ENCODE measurements at regions of chr4 and their contacts with region 1.

Region 1: DNA sequence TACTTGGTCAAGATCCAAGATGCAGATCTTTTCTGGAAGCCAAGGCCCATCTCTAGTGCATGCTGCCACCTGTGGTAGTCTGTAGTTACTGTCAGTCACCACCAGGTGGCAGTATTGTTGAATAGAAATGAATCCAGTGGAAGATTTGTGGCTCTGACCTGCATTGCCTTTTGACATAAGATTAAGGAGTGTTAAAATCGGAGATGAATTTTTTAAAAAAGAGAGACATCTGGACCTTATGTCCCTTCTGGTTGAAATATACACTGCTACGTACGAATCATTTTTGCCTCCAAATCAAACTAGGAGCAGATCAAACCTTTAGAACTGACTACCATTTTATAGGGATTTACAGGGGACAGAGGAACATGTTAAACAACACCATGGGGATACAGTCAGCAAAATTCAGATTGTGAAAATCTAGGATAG is 46.9 kb upstream of the RHOH start:
- DNase-seq: peak; percentile 79
- ATAC-seq: peak; percentile 95
- H3K4me3 ChIP-seq: no peak overlapping the region
- H3K27ac ChIP-seq: no peak overlapping the region
- H3K4me1 ChIP-seq: no peaks in the 10 kb centered on the region
- H3K27me3 ChIP-seq: no peaks in the 10 kb centered on the region
- CTCF ChIP-seq: peak; percentile 72 to 85 (median 73)
- EP300 ChIP-seq: no peak
- POLR2A ChIP-seq: no peak
- RAD21 ChIP-seq: peak; percentile 95

Region 2: GRCh38 chr4:40003986-40004385 is 146.0 kb before region 1 on chr4:
- CTCF ChIA-PET with region 1: no interaction called
- POLR2A ChIA-PET with region 1: no interaction called
- RAD21 ChIA-PET with region 1: no interaction called
- SMC1A ChIA-PET with region 1: no interaction called
- in situ Hi-C with region 1: no loop called
- intact Hi-C with region 1: no loop called
- DNase-seq: no peak
- ATAC-seq: peak; percentile 73
- H3K4me3 ChIP-seq: no peak overlapping the region
- H3K27ac ChIP-seq: no peak overlapping the region
- H3K4me1 ChIP-seq: no peaks in the 10 kb centered on the region
- H3K27me3 ChIP-seq: no peaks in the 10 kb centered on the region
- CTCF ChIP-seq: no peak
- EP300 ChIP-seq: no peak
- POLR2A ChIP-seq: no peak
- RAD21 ChIP-seq: no peak

Region 3: DNA sequence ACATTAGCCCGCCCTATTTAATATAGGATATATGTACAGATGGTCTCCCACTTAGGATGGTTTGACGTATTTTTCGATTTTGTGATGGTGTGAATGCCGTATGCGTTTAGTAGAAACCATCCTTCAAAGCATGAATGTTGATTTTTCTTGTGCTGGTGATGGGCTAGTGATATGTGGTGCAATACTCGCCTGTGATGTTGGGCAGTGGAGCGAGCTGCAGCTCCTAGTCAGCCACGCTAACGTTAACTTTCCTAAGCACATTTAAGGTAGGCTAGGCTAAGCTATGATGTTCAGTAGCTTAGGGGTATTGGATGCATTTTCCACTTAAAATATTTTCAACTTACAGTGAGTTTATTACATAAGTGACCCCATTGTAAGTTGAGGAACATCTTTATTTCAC is 10.3 kb after region 1 on chr4:
- CTCF ChIA-PET with region 1: interaction called, 6 read pairs
- POLR2A ChIA-PET with region 1: no interaction called
- RAD21 ChIA-PET with region 1: interaction called, 4 read pairs
- SMC1A ChIA-PET with region 1: interaction called, 15 read pairs
- in situ Hi-C with region 1: no loop called
- intact Hi-C with region 1: no loop called
- DNase-seq: no peak
- ATAC-seq: no peak
- H3K4me3 ChIP-seq: no peak overlapping the region
- H3K27ac ChIP-seq: no peak overlapping the region
- H3K4me1 ChIP-seq: no peaks in the 10 kb centered on the region
- H3K27me3 ChIP-seq: no peaks in the 10 kb centered on the region
- CTCF ChIP-seq: no peak
- EP300 ChIP-seq: no peak
- POLR2A ChIP-seq: no peak
- RAD21 ChIP-seq: no peak

Region 4: GRCh38 chr4:40185830-40186664 is 36.1 kb after region 1 on chr4:
- CTCF ChIA-PET with region 1: interaction called, 15 read pairs
- POLR2A ChIA-PET with region 1: interaction called, 16 read pairs
- RAD21 ChIA-PET with region 1: interaction called, 37 read pairs
- SMC1A ChIA-PET with region 1: interaction called, 95 read pairs
- in situ Hi-C with region 1: no loop called
- intact Hi-C with region 1: loop called (anchors 2 kb)
- DNase-seq: peak; percentile 94
- ATAC-seq: peak; percentile 66
- H3K4me3 ChIP-seq: no peak overlapping the region
- H3K27ac ChIP-seq: peak overlapping the region; percentile 89
- H3K4me1 ChIP-seq: peaks cover 46% of the 10 kb centered on the region
- H3K27me3 ChIP-seq: no peaks in the 10 kb centered on the region
- CTCF ChIP-seq: no peak
- EP300 ChIP-seq: peak; percentile 81 to 90
- POLR2A ChIP-seq: 0 out of 2 replicates have a peak, but pooled peaks have one; percentile 31
- RAD21 ChIP-seq: 0 out of 2 replicates have a peak, but pooled peaks have one; percentile 0

Region 5: DNA sequence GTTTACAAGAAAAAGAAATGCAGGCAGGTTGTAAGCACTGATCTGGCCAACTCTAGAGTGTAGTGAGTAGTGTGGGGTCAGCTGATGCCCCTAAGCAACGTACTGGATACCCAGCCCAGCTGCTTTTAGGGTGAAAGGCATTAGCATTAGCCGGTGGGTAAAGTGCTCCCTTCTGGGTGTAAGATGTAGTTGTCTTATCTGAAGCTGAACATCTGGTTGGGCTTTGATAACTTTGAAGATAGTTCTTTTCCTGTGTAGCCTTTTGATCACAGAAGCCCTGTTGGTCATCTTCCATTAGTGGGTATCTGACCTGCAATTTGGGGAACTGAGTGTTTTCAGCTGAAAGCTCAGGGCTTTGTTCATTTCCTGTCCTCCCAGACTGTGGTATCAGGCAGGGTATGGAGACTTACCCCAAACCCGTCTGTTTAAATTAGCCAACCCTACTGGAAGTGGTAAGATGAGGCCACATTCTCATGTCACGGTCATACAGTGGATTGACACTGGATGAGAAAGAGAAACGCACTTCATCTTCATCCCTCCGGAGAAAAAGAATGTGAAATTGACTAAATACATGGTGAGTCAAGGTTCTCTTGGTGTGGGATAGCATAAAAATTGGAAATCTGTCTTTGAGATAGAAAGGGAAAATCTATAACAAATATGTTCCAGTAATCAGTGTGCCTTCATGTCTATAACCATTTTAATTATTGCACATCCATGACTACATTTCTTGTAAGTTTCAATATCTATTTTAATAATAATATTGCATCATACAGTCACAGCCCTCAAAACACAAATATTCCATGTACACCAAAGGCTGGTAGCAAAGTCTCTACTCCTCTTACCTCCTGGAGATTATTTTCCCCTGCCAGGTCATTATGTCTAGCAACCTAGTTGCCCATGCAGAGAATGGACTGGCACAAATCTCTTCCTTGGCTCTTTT is 55.6 kb after region 1 on chr4:
- CTCF ChIA-PET with region 1: interaction called, 3 read pairs
- POLR2A ChIA-PET with region 1: interaction called, 4 read pairs
- RAD21 ChIA-PET with region 1: interaction called, 17 read pairs
- SMC1A ChIA-PET with region 1: interaction called, 21 read pairs
- in situ Hi-C with region 1: no loop called
- intact Hi-C with region 1: loop called (anchors 2 kb)
- DNase-seq: peak; percentile 96
- ATAC-seq: peak; percentile 57
- H3K4me3 ChIP-seq: peak overlapping the region; percentile 72
- H3K27ac ChIP-seq: peak overlapping the region; percentile 92
- H3K4me1 ChIP-seq: peaks cover 22% of the 10 kb centered on the region
- H3K27me3 ChIP-seq: no peaks in the 10 kb centered on the region
- CTCF ChIP-seq: no peak
- EP300 ChIP-seq: peak; percentile 78 to 86
- POLR2A ChIP-seq: peak; percentile 57
- RAD21 ChIP-seq: 0 out of 2 replicates have a peak, but pooled peaks have one; percentile 1

Region 6: DNA sequence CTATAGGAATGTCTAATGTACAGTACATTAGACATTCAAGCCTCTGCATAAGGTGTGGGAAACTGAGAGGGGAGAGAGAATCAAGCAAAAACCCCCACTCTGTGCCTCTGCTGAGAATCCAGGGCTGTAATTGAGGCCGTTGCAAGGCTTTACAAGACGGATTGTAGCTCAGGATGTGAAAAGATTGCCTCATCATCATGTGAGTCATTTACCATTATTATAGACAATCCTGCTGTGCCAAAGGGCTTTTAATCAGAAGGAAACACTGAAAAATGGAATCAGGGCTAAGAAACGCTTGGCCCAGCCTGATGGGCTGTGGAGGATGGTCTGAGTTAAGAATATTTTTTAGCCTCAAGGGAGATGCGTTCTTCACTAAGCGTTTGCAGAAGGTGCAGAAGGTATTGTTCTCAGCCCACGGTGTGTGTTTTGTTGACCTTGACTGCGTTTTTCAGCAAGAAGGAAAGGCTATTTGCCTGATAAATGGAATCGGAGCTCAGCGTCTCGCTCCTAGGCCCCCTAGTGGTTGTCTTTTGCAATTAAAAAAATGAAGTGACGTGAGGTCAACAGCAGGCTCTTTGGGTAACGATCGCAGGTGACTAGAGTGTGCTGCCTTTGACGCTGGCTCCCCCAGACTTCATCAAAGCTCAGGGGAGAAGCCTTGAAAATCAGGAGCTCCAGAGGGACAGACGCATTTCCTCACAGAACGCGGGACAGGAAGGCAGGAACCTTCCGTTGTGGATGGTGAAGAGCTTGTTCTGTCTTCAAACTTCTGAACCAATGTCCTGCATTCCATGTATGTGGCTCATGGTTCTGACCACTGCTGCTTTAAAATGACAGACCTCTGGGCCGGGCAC is 167.0 kb after region 1 on chr4:
- CTCF ChIA-PET with region 1: interaction called, 40 read pairs
- POLR2A ChIA-PET with region 1: interaction called, 6 read pairs
- RAD21 ChIA-PET with region 1: interaction called, 29 read pairs
- SMC1A ChIA-PET with region 1: interaction called, 56 read pairs
- in situ Hi-C with region 1: loop called (anchors 5 kb)
- intact Hi-C with region 1: loop called (anchors 1 kb)
- DNase-seq: peak; percentile 78
- ATAC-seq: peak; percentile 86
- H3K4me3 ChIP-seq: peak overlapping the region; percentile 62
- H3K27ac ChIP-seq: peak overlapping the region; percentile 75
- H3K4me1 ChIP-seq: peaks cover 10% of the 10 kb centered on the region
- H3K27me3 ChIP-seq: no peaks in the 10 kb centered on the region
- CTCF ChIP-seq: peak; percentile 75 to 88 (median 82)
- EP300 ChIP-seq: no peak
- POLR2A ChIP-seq: 0 out of 2 replicates have a peak, but pooled peaks have one; percentile 32
- RAD21 ChIP-seq: peak; percentile 74